Body of pancreas (tissue), 4 donors: ENCODE measurements at regions of chr11 and their contacts with region 1.

Region 1: GRCh38 chr11:1943977-1944376 is 3.2 kb upstream of the MRPL23 start:
- DNase-seq: peak in 1 of 4 donors; percentile 8
- ATAC-seq: no peak
- H3K4me3 ChIP-seq: no peak overlapping the region
- H3K27ac ChIP-seq: no peak overlapping the region
- H3K4me1 ChIP-seq: no peaks in the 10 kb centered on the region
- H3K27me3 ChIP-seq: no peaks in the 10 kb centered on the region
- CTCF ChIP-seq: no peak
- POLR2A ChIP-seq: no peak

Region 2: DNA sequence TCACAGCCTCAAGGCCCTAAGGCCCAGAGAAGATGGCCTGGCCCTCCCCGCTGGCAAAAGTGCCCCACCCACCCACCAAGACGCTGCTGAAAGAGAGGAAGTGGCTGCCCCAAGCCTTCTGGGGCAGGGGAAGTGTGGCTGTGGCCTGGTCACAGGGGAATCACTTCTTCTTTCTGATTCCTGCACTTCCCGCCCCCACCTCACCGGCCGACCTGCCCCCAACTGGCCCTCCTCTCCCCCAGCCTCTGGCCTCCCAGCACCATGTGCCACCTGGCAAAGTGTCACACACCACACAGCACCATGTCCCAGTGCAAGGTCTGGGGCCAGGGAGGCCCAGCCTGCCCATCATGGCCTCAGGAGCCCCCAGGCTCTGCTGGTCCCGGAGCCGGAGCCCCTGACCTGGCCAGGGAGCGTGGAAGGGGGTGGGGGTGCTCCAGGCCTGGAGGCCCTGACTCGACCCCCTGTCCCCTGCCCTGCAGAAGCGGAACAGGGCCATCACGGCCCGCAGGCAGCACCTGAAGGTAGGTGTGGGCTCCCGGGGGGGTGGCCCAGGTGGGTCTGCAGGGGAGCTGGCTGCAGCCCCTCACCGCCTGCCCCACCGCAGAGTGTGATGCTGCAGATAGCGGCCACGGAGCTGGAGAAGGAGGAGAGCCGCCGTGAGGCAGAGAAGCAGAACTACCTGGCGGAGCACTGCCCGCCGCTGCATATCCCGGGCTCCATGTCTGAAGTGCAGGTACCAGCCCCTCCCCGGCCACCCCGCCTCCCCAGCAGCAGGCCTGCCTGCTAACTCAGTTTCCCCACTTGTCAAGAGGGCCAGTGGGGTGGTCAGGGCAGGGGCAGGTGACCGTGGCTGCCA is 103.8 kb before region 1 on chr11:
- intact Hi-C with region 1: no loop called
- DNase-seq: peak in 2 of 4 donors; percentile 31 to 69
- ATAC-seq: no peak
- H3K4me3 ChIP-seq: no peak overlapping the region
- H3K27ac ChIP-seq: peak overlapping the region in 3 of 4 donors; percentile 94 to 98 (median 96)
- H3K4me1 ChIP-seq: peaks cover 79% of the 10 kb centered on the region
- H3K27me3 ChIP-seq: no peaks in the 10 kb centered on the region
- CTCF ChIP-seq: no peak
- POLR2A ChIP-seq: no peak

Region 3: GRCh38 chr11:1896923-1897322 is 47.1 kb before region 1 on chr11:
- intact Hi-C with region 1: loop called (anchors 5 kb)
- DNase-seq: no peak
- ATAC-seq: no peak
- H3K4me3 ChIP-seq: no peak overlapping the region
- H3K27ac ChIP-seq: no peak overlapping the region
- H3K4me1 ChIP-seq: peaks cover 7% of the 10 kb centered on the region
- H3K27me3 ChIP-seq: no peaks in the 10 kb centered on the region
- CTCF ChIP-seq: no peak
- POLR2A ChIP-seq: no peak

Region 4: DNA sequence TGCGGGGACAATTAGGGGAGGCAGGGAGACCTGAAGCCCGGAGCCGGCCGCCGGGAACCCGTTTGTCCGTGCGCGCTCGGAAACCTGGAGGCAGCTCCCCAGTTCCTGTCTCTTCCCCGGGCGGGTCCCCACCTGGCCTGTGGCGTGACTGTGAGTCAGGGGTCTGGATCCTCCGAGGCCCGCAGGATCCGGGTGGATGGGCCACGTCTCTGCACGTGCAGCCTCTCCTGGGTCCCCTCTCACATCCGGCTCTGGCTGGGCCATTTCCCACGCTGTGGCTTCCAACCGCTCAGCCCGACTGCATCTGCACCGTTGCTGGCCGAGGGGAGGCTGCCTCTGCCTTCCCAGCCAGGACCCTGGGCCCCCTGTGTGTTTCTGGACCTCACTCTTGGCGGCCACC is 68.5 kb after region 1 on chr11:
- intact Hi-C with region 1: no loop called
- DNase-seq: no peak
- ATAC-seq: no peak
- H3K4me3 ChIP-seq: no peak overlapping the region
- H3K27ac ChIP-seq: no peak overlapping the region
- H3K4me1 ChIP-seq: no peaks in the 10 kb centered on the region
- H3K27me3 ChIP-seq: no peaks in the 10 kb centered on the region
- CTCF ChIP-seq: no peak
- POLR2A ChIP-seq: no peak